Thyroid gland (tissue), 4 donors: ENCODE measurements at regions of chr17 and their contacts with region 1.

Region 1: DNA sequence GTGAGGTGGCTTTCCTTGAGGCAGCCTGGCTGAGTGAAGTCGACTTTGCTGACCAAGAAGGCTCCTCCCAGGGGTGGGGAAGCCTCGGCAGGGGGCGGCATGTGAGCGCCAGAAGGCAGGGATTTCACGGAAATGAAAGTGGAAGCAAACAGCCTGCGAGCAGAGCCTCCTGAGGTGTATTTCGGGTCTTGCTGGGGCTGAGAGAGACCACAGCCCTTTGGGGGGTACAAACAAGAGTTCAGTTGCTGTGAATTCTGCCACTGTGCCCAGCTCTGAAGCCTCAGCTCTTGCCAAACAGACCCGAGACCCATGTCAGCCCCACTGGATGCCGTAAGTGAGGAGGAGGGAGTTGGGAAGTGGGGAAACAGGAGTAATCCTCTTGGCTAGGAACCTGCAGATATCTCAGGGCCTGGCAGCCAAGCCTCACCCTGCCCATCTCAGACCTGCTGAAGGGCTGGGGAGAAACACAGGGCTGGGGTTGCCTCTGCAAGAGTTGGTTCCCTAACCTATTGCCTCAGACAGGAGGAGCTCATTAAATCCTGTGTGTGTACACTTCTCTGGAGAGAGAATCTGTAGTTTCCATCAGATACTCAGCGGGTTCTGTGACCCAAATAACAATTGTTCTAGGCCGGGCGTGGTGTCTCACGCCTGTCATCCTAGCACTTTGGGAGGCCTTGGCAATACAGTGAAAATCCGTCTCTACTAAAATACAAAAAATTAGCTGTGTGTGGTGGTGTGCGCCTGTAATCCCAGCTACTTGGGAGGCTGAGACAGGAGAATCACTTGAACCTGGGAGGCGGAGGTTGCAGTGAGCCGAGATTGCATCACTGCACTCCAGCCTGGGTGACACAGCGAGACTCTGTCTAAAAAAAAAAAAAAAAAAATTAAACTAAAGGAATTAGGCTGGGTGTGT is at the start of gene IFI35:
- DNase-seq: peak; percentile 87 to 92
- H3K4me3 ChIP-seq: peak within 1 kb of the TSS; percentile 24 to 54 (median 42)
- H3K27ac ChIP-seq: peak within 1 kb of the TSS; percentile 81 to 95 (median 87)
- H3K4me1 ChIP-seq: peaks cover 7 to 20% of the 10 kb centered on the region in 2 donors
- H3K27me3 ChIP-seq: no peaks in the 10 kb centered on the region
- CTCF ChIP-seq: peak in 4 of 6 experiments; percentile 27 to 60 (median 36)
- POLR2A ChIP-seq: peak in 1 of 2 donors; percentile 61
- total RNA-seq, gene IFI35: 23.9 to 43.9 (median 35.8) TPM

Region 2: DNA sequence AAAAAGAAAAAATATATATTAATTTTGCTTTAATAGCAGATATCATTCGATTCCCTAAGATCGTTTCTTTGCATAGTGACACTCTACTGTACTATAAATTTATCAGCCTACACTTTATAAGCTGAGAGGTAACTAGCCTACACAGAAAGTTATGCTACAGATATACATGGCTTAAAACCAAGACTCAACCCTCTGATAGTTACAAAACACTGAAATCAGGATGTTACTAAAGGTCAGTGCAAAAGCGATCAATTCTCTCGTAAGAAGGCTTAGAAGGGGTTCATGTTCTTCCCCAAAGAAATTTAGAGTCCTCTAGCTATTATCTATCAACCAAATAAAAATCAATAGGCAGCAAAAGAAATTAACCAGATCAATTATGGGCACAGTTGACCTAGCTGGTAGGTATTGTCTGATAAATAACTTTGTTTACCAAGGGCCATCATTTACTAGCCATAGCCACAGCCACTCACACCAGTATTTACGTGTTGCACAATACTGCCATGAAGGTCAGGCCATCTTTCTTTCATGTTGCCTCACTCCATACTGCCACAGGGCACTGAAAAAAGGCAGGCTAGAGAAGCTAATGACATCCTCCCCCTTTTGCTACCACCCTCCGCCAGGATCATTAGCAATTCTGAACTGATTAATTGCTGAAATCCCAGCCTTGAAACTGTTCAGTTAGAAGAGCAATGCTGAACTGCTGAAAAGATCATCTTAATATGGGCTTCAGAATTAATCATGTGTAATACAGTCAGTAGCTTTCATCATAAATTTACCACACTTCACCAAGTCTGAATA is 61.9 kb after region 1 on chr17:
- intact Hi-C with region 1: loop called (anchors 10 kb)
- DNase-seq: peak in 1 of 2 donors; percentile 19
- H3K4me3 ChIP-seq: no peak overlapping the region
- H3K27ac ChIP-seq: peak overlapping the region; percentile 32 to 88 (median 40)
- H3K4me1 ChIP-seq: peaks cover 2 to 19% of the 10 kb centered on the region in 2 donors
- H3K27me3 ChIP-seq: no peaks in the 10 kb centered on the region
- CTCF ChIP-seq: no peak
- POLR2A ChIP-seq: no peak